ENCODE measurements at regions of chr17 and their contacts with region 1.

Region 1: GRCh38 chr17:716238-716637 is 1.6 kb upstream of the VPS53 start:
- DNase-seq: no peak
- ATAC-seq: no peak
- H3K4me3 ChIP-seq: no peak overlapping the region
- H3K27ac ChIP-seq: no peak overlapping the region
- H3K4me1 ChIP-seq: peaks cover 4% of the 10 kb centered on the region; the same call in 1 of the 2 replicates
- H3K27me3 ChIP-seq: no peaks in the 10 kb centered on the region
- CTCF ChIP-seq: no peak
- POLR2A ChIP-seq: no peak
- RAD21 ChIP-seq: no peak

Region 2: DNA sequence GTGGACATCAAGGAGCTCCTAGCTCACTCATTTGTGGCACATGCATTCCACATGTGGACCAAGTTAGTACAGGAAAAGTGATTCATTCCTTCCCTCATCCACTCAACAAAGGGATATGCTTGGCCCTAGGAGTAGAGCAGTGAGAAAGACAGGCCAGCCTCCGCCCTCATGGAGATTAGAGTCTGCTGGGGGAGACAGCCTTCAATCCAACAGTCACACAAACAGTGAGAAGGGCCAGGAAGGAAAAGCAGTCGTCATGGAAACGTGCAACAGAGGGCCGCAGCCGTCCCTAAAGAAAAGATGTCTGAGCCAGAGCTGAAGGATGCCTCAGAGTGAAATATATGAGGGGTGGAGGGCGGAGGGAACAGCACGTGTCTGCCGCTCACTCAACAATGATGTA is 111.5 kb before region 1 on chr17:
- CTCF ChIA-PET with region 1: no interaction called
- POLR2A ChIA-PET with region 1: interaction called, 12 read pairs
- dilution Hi-C with region 1: no loop called
- in situ Hi-C with region 1: no loop called
- intact Hi-C with region 1: no loop called
- DNase-seq: peak; percentile 39
- ATAC-seq: no peak
- H3K4me3 ChIP-seq: no peak overlapping the region
- H3K27ac ChIP-seq: no peak overlapping the region
- H3K4me1 ChIP-seq: peaks cover 23% of the 10 kb centered on the region
- H3K27me3 ChIP-seq: no peaks in the 10 kb centered on the region
- CTCF ChIP-seq: no peak
- POLR2A ChIP-seq: no peak
- RAD21 ChIP-seq: no peak